ENCODE measurements at regions of chr10 and their contacts with region 1.

Region 1: GRCh38 chr10:127853868-127854768 is 38.6 kb downstream of the CLRN3 start:
- DNase-seq: peak; percentile 70
- ATAC-seq: peak; percentile 88
- H3K4me3 Mint-ChIP-seq: no peak overlapping the region
- H3K27ac Mint-ChIP-seq: no peak overlapping the region
- H3K4me1 Mint-ChIP-seq: peaks cover 11% of the 10 kb centered on the region
- H3K27me3 Mint-ChIP-seq: no peaks in the 10 kb centered on the region
- CTCF ChIP-seq: peak; percentile 83

Region 2: DNA sequence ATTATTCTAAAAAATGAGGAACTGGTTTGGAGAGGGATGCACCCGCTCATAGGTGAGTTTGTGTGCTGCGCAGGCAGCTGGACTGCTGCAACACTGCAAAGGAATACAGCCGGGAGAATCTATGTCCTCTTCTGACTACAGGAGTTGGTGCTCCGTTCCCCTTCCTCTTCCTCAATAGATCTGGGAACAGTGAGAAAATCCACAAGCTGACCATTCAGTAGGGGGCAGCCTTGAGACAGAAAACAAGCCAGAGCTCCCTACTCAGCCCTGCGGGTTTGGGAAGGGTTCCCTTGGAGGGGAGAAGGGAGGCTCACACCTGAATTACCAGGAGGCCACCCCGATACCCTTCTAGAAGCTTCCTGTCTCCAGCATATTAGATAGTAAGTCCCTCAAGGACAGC is 204.5 kb before region 1 on chr10:
- CTCF ChIA-PET with region 1: interaction called, 17 read pairs
- POLR2A ChIA-PET with region 1: no interaction called
- DNase-seq: peak; percentile 78
- ATAC-seq: peak; percentile 99
- H3K4me3 Mint-ChIP-seq: no peak overlapping the region
- H3K27ac Mint-ChIP-seq: no peak overlapping the region
- H3K4me1 Mint-ChIP-seq: no peaks in the 10 kb centered on the region
- H3K27me3 Mint-ChIP-seq: no peaks in the 10 kb centered on the region
- CTCF ChIP-seq: peak; percentile 27; the same call in 1 of the 2 replicates

Region 3: GRCh38 chr10:127679642-127680255 is 174.4 kb before region 1 on chr10:
- CTCF ChIA-PET with region 1: interaction called, 16 read pairs
- POLR2A ChIA-PET with region 1: no interaction called
- DNase-seq: peak; percentile 22
- ATAC-seq: peak; percentile 43; the same call in 1 of the 2 replicates
- H3K4me3 Mint-ChIP-seq: no peak overlapping the region
- H3K27ac Mint-ChIP-seq: no peak overlapping the region
- H3K4me1 Mint-ChIP-seq: peaks cover 8% of the 10 kb centered on the region
- H3K27me3 Mint-ChIP-seq: no peaks in the 10 kb centered on the region
- CTCF ChIP-seq: peak; percentile 62

Region 4: DNA sequence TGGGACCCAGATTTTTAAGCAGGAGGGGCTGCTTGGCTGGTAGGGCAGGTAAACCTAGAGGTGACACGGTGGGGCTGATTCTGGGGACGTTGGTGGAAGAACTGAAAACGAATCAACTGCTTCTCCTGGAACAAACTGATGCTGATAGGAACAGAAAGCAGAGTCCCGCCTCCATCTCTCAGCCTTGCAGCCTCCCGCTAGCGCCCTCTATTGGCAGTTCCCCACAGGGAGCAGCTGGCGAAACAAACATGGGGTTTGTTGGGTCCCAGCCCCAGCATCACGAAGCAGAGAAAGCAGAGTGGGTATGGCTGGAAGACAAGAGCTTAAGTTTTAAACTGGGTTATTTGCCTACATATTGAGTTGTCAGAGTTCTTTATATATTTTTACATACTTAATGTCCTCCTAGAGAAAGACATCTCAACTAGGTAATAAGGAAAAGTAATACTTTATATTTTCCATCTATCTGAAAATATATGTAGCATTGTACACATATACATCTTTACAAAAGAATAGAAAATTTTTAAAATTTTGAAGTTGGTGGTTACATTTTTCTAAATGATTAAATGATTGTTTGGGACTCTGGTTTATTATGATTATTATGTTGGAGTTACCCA is 159.4 kb before region 1 on chr10:
- CTCF ChIA-PET with region 1: interaction called, 16 read pairs
- POLR2A ChIA-PET with region 1: no interaction called
- DNase-seq: peak; percentile 93
- ATAC-seq: peak; percentile 90
- H3K4me3 Mint-ChIP-seq: no peak overlapping the region
- H3K27ac Mint-ChIP-seq: no peak overlapping the region; the same call in 1 of the 2 replicates
- H3K4me1 Mint-ChIP-seq: peaks cover 33% of the 10 kb centered on the region
- H3K27me3 Mint-ChIP-seq: no peaks in the 10 kb centered on the region
- CTCF ChIP-seq: peak; percentile 79

Region 5: GRCh38 chr10:127715782-127716378 is 138.2 kb before region 1 on chr10:
- CTCF ChIA-PET with region 1: interaction called, 49 read pairs
- POLR2A ChIA-PET with region 1: no interaction called
- DNase-seq: no peak
- ATAC-seq: no peak; the same call in 1 of the 2 replicates
- H3K4me3 Mint-ChIP-seq: no peak overlapping the region
- H3K27ac Mint-ChIP-seq: no peak overlapping the region
- H3K4me1 Mint-ChIP-seq: 0 out of 2 replicates have a peak, but pooled peaks cover 2% of the 10 kb centered on the region
- H3K27me3 Mint-ChIP-seq: no peaks in the 10 kb centered on the region; the same call in 1 of the 2 replicates
- CTCF ChIP-seq: no peak

Region 6: DNA sequence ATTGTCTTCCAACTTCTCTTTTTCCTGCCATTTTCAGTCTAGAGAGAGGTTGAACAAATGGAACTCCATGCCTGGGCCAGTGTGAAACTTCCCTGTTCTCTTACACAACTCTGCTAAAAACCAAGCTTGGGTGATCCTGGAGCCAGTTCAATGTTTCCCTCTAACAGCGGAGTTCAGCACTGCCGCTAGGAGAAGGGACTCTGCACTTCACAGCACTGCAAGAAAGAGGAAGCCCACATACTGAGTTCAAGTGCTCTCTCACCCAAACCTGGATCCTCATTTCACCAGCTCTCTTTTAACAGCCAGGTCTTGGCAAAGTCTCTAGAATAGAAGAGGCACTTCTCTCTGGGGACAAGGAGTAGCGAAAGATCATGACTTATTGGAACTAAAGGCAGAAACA is 98.4 kb before region 1 on chr10:
- CTCF ChIA-PET with region 1: interaction called, 11 read pairs
- POLR2A ChIA-PET with region 1: no interaction called
- DNase-seq: no peak
- ATAC-seq: peak; percentile 77
- H3K4me3 Mint-ChIP-seq: no peak overlapping the region
- H3K27ac Mint-ChIP-seq: no peak overlapping the region
- H3K4me1 Mint-ChIP-seq: peaks cover 6% of the 10 kb centered on the region
- H3K27me3 Mint-ChIP-seq: peaks cover 2% of the 10 kb centered on the region; the same call in 1 of the 2 replicates
- CTCF ChIP-seq: no peak

Region 7: DNA sequence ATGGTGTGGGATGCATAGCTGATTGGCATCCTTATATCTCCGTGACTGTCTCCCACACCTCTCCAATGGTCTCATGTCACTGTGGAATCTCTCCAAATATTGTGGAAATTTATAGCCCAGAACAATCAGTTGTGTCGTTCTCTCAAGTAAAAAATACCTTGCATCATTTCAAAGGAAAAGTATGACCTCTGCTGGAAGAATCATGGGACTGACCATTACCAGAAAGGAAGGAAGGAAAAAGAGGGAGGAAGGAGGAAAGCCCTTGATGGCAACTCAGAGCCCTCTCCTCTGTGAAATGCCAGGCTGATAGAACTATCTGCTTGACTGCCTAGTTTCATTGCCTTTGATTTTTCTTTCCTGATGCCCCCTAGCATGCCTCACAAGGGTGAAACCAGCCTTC is 40.8 kb before region 1 on chr10:
- CTCF ChIA-PET with region 1: interaction called, 12 read pairs
- POLR2A ChIA-PET with region 1: no interaction called
- DNase-seq: no peak
- ATAC-seq: peak; percentile 50
- H3K4me3 Mint-ChIP-seq: no peak overlapping the region
- H3K27ac Mint-ChIP-seq: no peak overlapping the region
- H3K4me1 Mint-ChIP-seq: peaks cover 5% of the 10 kb centered on the region; the same call in 1 of the 2 replicates
- H3K27me3 Mint-ChIP-seq: no peaks in the 10 kb centered on the region; the same call in 1 of the 2 replicates
- CTCF ChIP-seq: no peak

Region 8: DNA sequence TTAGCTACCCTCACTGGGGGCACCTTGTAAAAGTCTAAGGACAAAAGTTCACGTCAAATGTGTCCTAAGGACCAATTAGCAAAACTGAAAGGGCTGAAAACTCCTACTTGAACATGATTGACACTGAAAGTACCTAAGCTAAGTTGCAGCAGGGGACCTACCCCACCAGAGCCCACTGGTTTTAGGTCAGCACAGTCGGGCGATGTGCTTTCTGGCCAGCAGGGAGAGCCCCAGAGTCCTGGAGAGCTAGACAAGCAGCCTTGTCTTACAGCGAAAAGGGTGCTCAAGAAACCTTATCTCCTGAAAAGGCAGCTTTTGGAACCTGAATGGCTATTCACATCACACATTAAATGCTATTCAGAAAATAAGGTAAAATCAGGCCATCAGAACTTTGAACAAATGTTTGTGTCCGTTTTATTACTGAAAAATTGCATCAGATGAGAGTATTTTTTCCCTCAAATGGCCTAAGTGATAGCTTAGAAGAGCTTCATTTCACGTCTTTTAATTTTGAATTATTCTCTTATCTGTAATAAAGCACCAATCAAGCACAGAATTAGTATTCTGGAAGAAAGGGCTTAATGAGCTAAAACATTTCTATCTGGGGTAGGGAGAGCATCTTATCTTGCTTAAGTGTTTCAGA is 324.3 kb after region 1 on chr10:
- CTCF ChIA-PET with region 1: no interaction called
- POLR2A ChIA-PET with region 1: no interaction called
- DNase-seq: peak; percentile 78
- ATAC-seq: peak; percentile 99
- H3K4me3 Mint-ChIP-seq: no peak overlapping the region
- H3K27ac Mint-ChIP-seq: no peak overlapping the region
- H3K4me1 Mint-ChIP-seq: peaks cover 13% of the 10 kb centered on the region
- H3K27me3 Mint-ChIP-seq: no peaks in the 10 kb centered on the region; the same call in 1 of the 2 replicates
- CTCF ChIP-seq: no peak

Measured in WTC11 (cell line).